Activated T-helper 2 cell treated with anti-CD3 and anti-CD28 coated beads, Interferon-gamma antibody, Interleukin-2, Interleukin-4, amounts not matched to agents 10 μg/mL and 5 μg/mL and 100 μg/mL, durations not matched to agents 14 hours and 24 hours and 36 hours (primary cell): ENCODE measurements at regions of chr11 and their contacts with region 1.

Region 1: DNA sequence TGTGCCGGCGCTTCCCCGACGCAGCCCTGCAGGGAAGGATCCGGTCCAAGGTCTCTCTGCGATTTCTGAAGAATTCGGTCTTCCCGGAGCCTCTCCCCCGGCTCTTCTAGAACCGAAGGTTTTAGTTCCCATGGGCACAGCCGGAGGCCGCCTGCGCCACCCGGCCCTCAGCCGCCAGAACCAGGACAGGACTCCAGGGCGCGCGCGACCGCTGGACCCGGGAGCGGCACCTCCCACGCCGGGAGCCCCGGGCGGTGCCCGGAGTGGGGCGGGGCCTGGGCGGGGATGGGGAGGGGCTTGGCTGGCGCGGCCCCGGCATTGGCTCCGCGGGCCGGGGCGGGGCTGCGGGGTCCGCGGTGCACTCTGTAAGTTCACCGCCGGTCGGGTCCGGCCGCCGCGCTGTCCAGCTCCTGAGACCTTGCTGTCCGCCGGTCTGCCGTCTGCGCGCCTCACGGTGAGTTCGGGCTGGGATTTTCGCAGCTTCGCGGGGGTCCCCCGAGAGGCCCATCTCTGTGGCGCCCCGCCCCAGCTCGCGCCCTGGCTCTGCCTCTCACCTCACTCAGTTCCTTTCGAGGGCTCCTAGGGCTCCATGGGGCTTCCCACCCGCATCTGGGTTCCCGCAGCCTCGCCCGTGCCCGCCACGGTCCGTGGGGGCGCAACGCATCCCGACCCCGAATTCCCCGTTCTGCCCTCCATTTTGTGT is at the start of gene CDC42EP2:
- DNase-seq: peak; percentile 69
- H3K4me3 Mint-ChIP-seq: peak within 1 kb of the TSS; percentile 80
- H3K27ac Mint-ChIP-seq: no peak within 1 kb of the TSS
- H3K4me1 Mint-ChIP-seq: peaks cover 9% of the 10 kb centered on the region
- H3K27me3 Mint-ChIP-seq: no peaks in the 10 kb centered on the region
- total RNA-seq, gene CDC42EP2: 3.4 and 5.1 TPM in 2 replicates

Region 2: GRCh38 chr11:65215441-65216076 is 99.1 kb before region 1 on chr11:
- intact Hi-C with region 1: loop called (anchors 5 kb)
- DNase-seq: no peak
- H3K4me3 Mint-ChIP-seq: no peak overlapping the region
- H3K27ac Mint-ChIP-seq: peak overlapping the region; percentile 90
- H3K4me1 Mint-ChIP-seq: peaks cover 14% of the 10 kb centered on the region
- H3K27me3 Mint-ChIP-seq: peaks cover 6% of the 10 kb centered on the region

Region 3: DNA sequence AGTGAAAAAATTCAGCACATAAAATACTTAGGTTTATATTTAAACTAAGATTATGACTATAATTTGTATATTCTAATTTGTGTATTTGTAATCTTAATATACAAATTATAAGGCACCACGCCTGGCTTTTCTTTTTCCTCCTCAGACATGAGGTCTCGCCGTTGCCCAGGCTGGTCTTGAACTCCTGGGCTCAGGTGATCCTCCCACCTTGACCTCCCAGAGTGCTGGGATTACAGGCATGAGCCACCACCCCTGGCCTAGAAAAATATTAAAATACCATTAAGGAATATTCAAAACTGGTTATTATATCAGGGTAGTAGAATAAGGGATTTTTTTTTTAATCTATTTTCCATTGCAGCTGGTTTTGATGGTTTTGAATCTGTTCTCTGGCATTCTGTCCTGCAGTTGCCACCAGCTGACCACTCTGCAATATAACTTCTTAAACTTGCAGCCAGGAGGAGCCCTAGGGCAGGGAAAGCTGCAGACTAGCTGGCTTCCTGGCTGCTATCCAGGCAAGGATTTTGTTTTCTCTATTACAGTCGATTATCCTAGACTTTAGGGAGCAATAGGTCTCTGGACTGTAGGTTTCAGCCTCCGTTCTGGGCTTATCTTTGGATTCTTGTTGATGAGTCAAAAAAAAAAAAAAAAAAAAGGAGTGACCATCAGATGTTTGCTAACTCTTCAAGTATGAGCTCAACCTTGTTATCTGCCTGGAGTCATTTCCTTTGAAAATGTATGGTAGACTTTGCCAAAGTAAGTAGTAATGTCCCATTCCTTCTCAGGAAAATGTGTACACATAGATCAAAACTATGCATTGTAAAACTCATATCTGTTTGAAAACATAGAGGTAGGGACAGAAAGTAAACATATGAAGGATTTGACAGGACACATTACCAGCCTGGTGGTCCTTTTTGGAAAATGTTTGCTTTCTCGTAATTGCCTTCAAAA is 39.6 kb before region 1 on chr11:
- intact Hi-C with region 1: loop called (anchors 2 kb)
- DNase-seq: no peak
- H3K4me3 Mint-ChIP-seq: no peak overlapping the region
- H3K27ac Mint-ChIP-seq: no peak overlapping the region
- H3K4me1 Mint-ChIP-seq: peaks cover 13% of the 10 kb centered on the region
- H3K27me3 Mint-ChIP-seq: no peaks in the 10 kb centered on the region

Region 4: GRCh38 chr11:65329944-65330403 is 15.3 kb after region 1 on chr11:
- intact Hi-C with region 1: loop called (anchors 2 kb)
- DNase-seq: peak; percentile 69
- H3K4me3 Mint-ChIP-seq: no peak overlapping the region
- H3K27ac Mint-ChIP-seq: no peak overlapping the region
- H3K4me1 Mint-ChIP-seq: peaks cover 10% of the 10 kb centered on the region
- H3K27me3 Mint-ChIP-seq: no peaks in the 10 kb centered on the region